GM12878 (cell line): ENCODE measurements at regions of chr7 and their contacts with region 1.

Region 1: GRCh38 chr7:45663167-45663921 is 89.2 kb downstream of the ADCY1 start:
- DNase-seq: no peak
- ATAC-seq: peak; percentile 88
- H3K4me3 ChIP-seq: no peak overlapping the region
- H3K27ac ChIP-seq: no peak overlapping the region
- H3K4me1 ChIP-seq: no peaks in the 10 kb centered on the region
- H3K27me3 ChIP-seq: no peaks in the 10 kb centered on the region
- CTCF ChIP-seq: peak; percentile 43 to 74 (median 63)
- EP300 ChIP-seq: no peak
- POLR2A ChIP-seq: no peak
- RAD21 ChIP-seq: peak; percentile 52

Region 2: DNA sequence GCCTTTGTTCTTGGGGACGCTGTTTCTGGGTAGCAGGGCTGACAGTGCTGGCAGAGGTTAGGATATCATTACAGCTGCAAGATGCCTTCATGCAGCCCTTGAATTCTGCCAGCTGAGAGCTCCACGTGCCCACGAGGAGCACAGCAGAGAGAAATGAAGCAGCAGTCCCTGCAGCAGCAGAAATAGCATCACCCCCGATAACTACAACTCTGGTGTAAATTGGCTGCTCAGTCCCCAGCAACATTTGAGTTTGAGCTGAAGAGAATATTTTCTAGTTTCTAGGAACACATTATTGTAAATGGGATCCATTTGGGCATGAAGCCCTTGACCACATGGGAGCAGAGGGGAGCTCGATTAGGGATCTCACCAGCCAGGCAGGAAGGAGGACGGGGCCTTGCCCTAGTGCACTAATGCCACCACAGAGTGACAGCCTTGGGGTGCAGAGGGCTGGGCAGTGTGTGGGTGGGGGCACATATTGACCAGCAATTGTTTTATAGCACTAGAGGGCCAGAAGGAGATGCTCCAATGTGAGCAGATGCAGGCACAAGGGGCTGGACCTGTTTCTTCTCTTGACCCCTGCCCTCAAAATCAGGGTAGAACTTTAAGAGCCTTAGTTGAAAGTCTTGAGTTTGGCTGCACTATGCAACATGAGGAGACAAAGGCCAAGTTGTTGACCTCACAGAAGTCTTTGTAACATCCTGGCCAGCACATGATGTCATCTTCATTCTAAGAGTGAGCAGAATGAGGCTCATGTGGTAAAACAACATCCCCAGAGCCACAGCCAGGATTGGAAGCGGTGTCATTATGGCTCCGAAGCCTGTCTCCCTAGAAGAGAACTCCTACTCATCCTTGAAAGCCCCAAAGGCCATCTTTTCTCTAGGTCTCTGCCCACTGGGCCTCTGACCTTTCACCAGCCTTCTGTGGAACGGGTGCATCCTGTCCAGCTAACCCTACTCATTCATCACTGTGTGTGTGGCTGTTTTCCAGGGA is 36.6 kb before region 1 on chr7:
- CTCF ChIA-PET with region 1: no interaction called
- POLR2A ChIA-PET with region 1: no interaction called
- RAD21 ChIA-PET with region 1: no interaction called
- SMC1A ChIA-PET with region 1: no interaction called
- in situ Hi-C with region 1: no loop called
- intact Hi-C with region 1: no loop called
- DNase-seq: no peak
- ATAC-seq: no peak
- H3K4me3 ChIP-seq: no peak overlapping the region
- H3K27ac ChIP-seq: no peak overlapping the region
- H3K4me1 ChIP-seq: no peaks in the 10 kb centered on the region
- H3K27me3 ChIP-seq: no peaks in the 10 kb centered on the region; a peak in 2 of 4 replicates
- CTCF ChIP-seq: no peak
- EP300 ChIP-seq: no peak
- POLR2A ChIP-seq: no peak
- RAD21 ChIP-seq: no peak

Region 3: DNA sequence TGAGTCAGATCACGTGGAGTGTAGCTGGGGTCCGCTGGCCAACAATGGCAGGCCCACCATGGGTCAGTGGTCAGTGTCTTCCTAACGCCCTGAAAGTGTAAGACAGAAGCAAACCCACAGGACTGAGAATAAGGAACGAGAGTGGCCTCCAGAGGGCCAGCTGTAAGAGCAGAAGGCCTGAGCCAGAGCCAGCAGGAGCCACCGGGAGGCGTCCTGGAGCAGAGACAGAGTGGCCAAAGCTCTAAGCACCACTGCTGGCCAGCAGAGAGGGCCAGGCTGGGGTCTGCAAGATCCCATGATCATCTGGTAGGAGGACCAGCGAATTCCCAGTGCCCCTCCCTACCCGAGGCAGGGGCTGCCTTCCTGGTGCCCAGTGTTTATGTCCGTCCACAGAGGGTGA is 200.4 kb after region 1 on chr7:
- CTCF ChIA-PET with region 1: interaction called, 10 read pairs
- POLR2A ChIA-PET with region 1: no interaction called
- RAD21 ChIA-PET with region 1: no interaction called
- SMC1A ChIA-PET with region 1: no interaction called
- in situ Hi-C with region 1: no loop called
- intact Hi-C with region 1: no loop called
- DNase-seq: no peak
- ATAC-seq: no peak
- H3K4me3 ChIP-seq: no peak overlapping the region
- H3K27ac ChIP-seq: no peak overlapping the region
- H3K4me1 ChIP-seq: no peaks in the 10 kb centered on the region
- H3K27me3 ChIP-seq: no peaks in the 10 kb centered on the region; a peak in 2 of 4 replicates
- CTCF ChIP-seq: no peak
- EP300 ChIP-seq: no peak
- POLR2A ChIP-seq: no peak
- RAD21 ChIP-seq: no peak